ENCODE measurements at regions of chr10 and their contacts with region 1.

Region 1: GRCh38 chr10:102904346-102904745 is 13.7 kb upstream of the CNNM2 start:
- DNase-seq: no peak
- H3K4me3 ChIP-seq: no peak overlapping the region
- CTCF ChIP-seq: no peak

Region 2: GRCh38 chr10:102729029-102730026 is 175.0 kb before region 1 on chr10:
- CTCF ChIA-PET with region 1: interaction called, 88 read pairs
- POLR2A ChIA-PET with region 1: no interaction called
- DNase-seq: no peak
- H3K4me3 ChIP-seq: no peak overlapping the region
- CTCF ChIP-seq: peak; percentile 95

Region 3: DNA sequence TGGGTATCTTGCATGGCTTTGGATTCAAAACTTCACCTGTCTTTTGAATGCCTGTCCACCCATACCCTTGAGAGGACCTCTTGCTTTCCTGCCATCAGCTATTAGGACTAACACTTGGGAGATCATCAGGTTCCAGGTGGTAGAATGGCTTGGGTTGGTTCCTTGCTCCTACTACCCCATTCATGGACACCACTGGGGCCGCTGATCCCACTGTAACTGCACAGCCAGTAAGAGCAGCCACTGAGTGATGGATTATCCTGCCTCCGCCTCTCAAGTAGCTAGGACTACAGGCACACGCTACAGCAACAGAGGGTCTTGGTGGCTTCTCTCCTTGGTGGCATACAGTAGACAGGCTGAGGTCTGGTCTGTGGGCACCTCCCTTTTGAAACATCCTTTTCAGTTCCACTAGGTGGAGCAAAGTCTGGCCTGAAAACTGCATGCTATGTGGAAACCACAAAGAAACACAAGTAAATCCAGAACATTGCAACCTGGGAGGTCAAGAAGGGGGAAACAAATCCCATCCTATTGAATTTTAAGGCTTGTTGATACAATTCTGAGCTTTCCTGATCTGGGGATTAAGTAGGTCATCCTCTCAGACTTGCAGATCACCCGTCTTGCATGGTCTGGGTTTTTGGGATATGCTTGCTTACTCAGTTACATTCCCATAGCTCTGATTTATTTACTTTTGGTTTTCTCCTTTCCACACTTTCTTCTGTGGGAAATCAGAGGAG is 151.2 kb before region 1 on chr10:
- CTCF ChIA-PET with region 1: interaction called, 39 read pairs
- POLR2A ChIA-PET with region 1: no interaction called
- DNase-seq: peak; percentile 67
- H3K4me3 ChIP-seq: no peak overlapping the region; the same call in 1 of the 2 replicates
- CTCF ChIP-seq: peak; percentile 58

Region 4: DNA sequence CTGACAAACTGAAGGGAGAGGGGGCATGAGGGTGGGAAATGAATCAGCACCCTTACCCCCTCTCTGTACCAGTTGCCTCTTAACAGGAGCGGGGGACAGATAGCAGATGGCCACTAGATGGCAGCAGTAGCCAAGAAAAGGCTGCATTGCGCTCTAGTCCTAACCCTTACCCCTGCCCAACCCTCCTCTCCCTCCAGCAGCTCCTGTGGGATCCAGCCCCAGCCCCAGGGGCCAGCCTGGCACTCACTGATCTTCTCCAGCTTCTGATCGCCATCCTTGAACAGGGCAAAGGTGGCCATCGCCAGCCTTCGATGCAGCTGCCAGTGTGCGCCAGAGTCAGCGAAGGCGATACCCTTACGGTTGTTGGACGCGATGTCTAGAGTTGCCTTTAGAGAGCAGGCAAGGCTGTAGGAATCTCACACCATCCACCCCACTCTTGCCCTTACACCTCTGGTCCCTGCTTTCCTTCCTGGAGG is 69.3 kb before region 1 on chr10:
- CTCF ChIA-PET with region 1: interaction called, 355 read pairs
- POLR2A ChIA-PET with region 1: no interaction called
- DNase-seq: no peak
- H3K4me3 ChIP-seq: no peak overlapping the region
- CTCF ChIP-seq: peak; percentile 85

Region 5: GRCh38 chr10:102869258-102870198 is 34.8 kb before region 1 on chr10 and contains the start of gene AS3MT:
- CTCF ChIA-PET with region 1: interaction called, 14 read pairs
- POLR2A ChIA-PET with region 1: no interaction called
- DNase-seq: no peak
- H3K4me3 ChIP-seq: peak within 1 kb of the TSS; percentile 63
- CTCF ChIP-seq: no peak

Region 6: GRCh38 chr10:102917962-102918816 is 13.8 kb after region 1 on chr10 and contains the start of gene CNNM2:
- CTCF ChIA-PET with region 1: interaction called, 113 read pairs
- POLR2A ChIA-PET with region 1: no interaction called
- DNase-seq: peak; percentile 97
- H3K4me3 ChIP-seq: peak within 1 kb of the TSS; percentile 99
- CTCF ChIP-seq: no peak

Region 7: GRCh38 chr10:103021897-103022286 is 117.5 kb after region 1 on chr10:
- CTCF ChIA-PET with region 1: no interaction called
- POLR2A ChIA-PET with region 1: no interaction called
- DNase-seq: no peak
- H3K4me3 ChIP-seq: no peak overlapping the region
- CTCF ChIP-seq: no peak

Region 8: DNA sequence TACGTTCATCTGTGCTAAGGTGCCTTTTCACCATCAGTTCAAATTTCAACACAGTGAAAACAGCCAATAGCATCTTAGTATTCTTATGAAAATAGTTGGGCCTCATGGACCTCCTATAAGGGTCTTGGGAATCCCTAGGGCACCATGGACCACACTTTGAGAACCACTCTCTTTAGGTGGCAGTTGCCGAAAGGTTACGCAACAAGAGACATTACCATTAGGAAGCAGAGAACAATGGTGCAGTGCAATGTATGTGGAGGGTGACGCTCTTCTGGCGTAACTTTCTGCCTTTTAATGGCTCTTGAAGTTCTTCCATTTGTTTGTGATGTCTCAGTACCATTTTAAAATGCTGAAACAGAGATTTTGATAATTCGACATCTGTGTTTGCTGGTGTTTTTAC is 144.9 kb after region 1 on chr10:
- CTCF ChIA-PET with region 1: no interaction called
- POLR2A ChIA-PET with region 1: no interaction called
- DNase-seq: no peak
- H3K4me3 ChIP-seq: no peak overlapping the region
- CTCF ChIP-seq: no peak

Measured in AG04449 (cell line).